B cell (primary cell): ENCODE measurements at regions of chr11 and their contacts with region 1.

Region 1: GRCh38 chr11:107549253-107549953 is 16.1 kb downstream of the ALKBH8 start:
- DNase-seq: peak; percentile 59
- ATAC-seq: no peak
- H3K4me3 ChIP-seq: no peak overlapping the region
- H3K4me3 Mint-ChIP-seq: no peak overlapping the region
- H3K27ac ChIP-seq: no peak overlapping the region
- H3K27ac Mint-ChIP-seq: no peak overlapping the region
- H3K4me1 ChIP-seq: no peaks in the 10 kb centered on the region
- H3K4me1 Mint-ChIP-seq: no peaks in the 10 kb centered on the region
- H3K27me3 ChIP-seq: no peaks in the 10 kb centered on the region
- H3K27me3 Mint-ChIP-seq: no peaks in the 10 kb centered on the region
- CTCF ChIP-seq: peak; percentile 97

Region 2: GRCh38 chr11:107689317-107690202 is 140.2 kb after region 1 on chr11:
- CTCF ChIA-PET with region 1: interaction called, 73 read pairs
- POLR2A ChIA-PET with region 1: no interaction called
- intact Hi-C with region 1: loop called (anchors 1 kb)
- DNase-seq: peak; percentile 63
- ATAC-seq: peak; percentile 57
- H3K4me3 ChIP-seq: no peak overlapping the region
- H3K4me3 Mint-ChIP-seq: no peak overlapping the region
- H3K27ac ChIP-seq: no peak overlapping the region
- H3K27ac Mint-ChIP-seq: no peak overlapping the region
- H3K4me1 ChIP-seq: no peaks in the 10 kb centered on the region
- H3K4me1 Mint-ChIP-seq: no peaks in the 10 kb centered on the region
- H3K27me3 ChIP-seq: no peaks in the 10 kb centered on the region
- H3K27me3 Mint-ChIP-seq: peaks cover 21% of the 10 kb centered on the region
- CTCF ChIP-seq: peak; percentile 64

Region 3: DNA sequence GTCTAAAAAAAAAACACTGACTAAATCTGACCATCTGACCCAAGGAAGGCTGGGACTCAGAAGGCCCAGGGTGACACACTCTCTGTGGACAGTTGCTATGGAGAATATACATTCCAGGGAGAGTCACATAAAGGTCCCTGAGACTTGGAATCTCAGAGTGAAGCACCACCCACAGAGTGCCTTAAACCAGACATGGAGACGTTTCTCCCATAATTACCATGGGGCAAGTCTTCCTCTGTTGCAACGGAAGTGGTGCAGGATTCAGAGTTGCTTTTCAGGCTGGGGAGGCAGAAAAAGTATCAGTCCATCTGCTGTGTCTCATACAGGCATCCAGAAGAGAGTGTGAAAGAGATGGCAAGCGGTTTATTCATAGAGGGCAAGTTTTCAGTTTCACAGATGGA is 221.1 kb after region 1 on chr11:
- CTCF ChIA-PET with region 1: interaction called, 14 read pairs
- POLR2A ChIA-PET with region 1: no interaction called
- intact Hi-C with region 1: loop called (anchors 1 kb)
- DNase-seq: no peak
- ATAC-seq: no peak
- H3K4me3 ChIP-seq: no peak overlapping the region
- H3K4me3 Mint-ChIP-seq: no peak overlapping the region
- H3K27ac ChIP-seq: no peak overlapping the region
- H3K27ac Mint-ChIP-seq: no peak overlapping the region
- H3K4me1 ChIP-seq: no peaks in the 10 kb centered on the region
- H3K4me1 Mint-ChIP-seq: no peaks in the 10 kb centered on the region
- H3K27me3 ChIP-seq: no peaks in the 10 kb centered on the region
- H3K27me3 Mint-ChIP-seq: peaks cover 25% of the 10 kb centered on the region
- CTCF ChIP-seq: no peak